Naive thymus-derived CD8-positive, alpha-beta T cell (primary cell): ENCODE measurements at regions of chr2 and their contacts with region 1.

Region 1: GRCh38 chr2:74178201-74179062 is at the start of gene MOB1A:
- DNase-seq: peak; percentile 94 to 98 (median 97)
- ATAC-seq: peak; percentile 90 to 91
- H3K4me3 Mint-ChIP-seq: peak within 1 kb of the TSS; percentile 82 to 95 (median 91)
- H3K27ac Mint-ChIP-seq: peak within 1 kb of the TSS; percentile 82 to 98 (median 96)
- H3K4me1 Mint-ChIP-seq: peaks cover 6 to 55% (median 34%) of the 10 kb centered on the region in 4 donors
- H3K27me3 Mint-ChIP-seq: no peaks in the 10 kb centered on the region
- polyA plus RNA-seq, gene MOB1A: 111 to 152 (median 145) TPM

Region 2: DNA sequence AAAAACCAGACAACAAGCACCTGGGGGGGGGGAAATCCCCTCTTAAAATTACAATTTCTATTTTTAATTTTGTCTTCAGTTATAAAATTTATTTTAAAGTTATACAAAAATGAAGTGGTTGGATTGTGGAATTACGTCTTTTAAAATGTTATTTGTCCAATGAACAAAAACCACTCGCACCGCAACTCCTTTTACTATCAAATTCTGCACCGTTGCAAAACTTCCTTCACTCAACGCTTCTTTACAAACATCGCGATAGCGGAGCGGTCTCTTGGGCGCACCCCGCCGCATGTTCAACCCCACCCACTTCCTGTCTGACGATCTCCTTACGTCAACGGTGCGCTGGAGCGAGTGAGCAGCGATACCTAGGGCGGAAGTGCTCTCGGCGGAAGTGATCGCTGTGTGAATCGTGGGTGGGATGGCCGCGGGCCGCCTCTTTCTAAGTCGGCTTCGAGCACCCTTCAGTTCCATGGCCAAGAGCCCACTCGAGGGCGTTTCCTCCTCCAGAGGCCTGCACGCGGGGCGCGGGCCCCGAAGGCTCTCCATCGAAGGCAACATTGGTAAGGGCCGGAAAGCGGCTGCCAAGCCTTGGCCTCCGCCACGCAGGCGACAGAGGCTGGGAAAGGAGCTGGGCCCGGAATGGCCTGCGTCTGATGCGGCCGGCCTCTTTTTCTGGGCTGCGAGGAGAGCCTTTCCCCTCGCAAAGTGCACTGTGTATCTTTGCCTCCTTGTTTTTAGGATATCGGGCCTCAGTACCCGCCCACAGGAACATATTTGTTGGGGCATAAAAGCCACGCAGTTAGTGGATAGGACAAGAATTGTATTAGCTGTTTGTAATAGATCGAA is 251.7 kb before region 1 on chr2 and contains the start of gene DGUOK:
- POLR2A ChIA-PET with region 1: interaction called, 12 read pairs
- DNase-seq: peak; percentile 86 to 99 (median 98)
- ATAC-seq: peak; percentile 95 to 98
- H3K4me3 Mint-ChIP-seq: peak within 1 kb of the TSS; percentile 79 to 95 (median 92)
- H3K27ac Mint-ChIP-seq: peak within 1 kb of the TSS; percentile 90 to 99 (median 98)
- H3K4me1 Mint-ChIP-seq: peaks cover 26 to 63% (median 55%) of the 10 kb centered on the region in 4 donors
- H3K27me3 Mint-ChIP-seq: no peaks in the 10 kb centered on the region
- polyA plus RNA-seq, gene DGUOK: 207 to 219 (median 215) TPM

Region 3: GRCh38 chr2:74147727-74148456 is 30.5 kb before region 1 on chr2 and contains the start of gene BOLA3:
- POLR2A ChIA-PET with region 1: interaction called, 43 read pairs
- DNase-seq: peak; percentile 59 to 86 (median 77)
- ATAC-seq: peak; percentile 88 to 92
- H3K4me3 Mint-ChIP-seq: no peak within 1 kb of the TSS
- H3K27ac Mint-ChIP-seq: no peak within 1 kb of the TSS
- H3K4me1 Mint-ChIP-seq: peaks cover 0 to 4% (median 0%) of the 10 kb centered on the region in 4 donors
- H3K27me3 Mint-ChIP-seq: no peaks in the 10 kb centered on the region
- polyA plus RNA-seq, gene BOLA3: 59.9 to 78.5 (median 68.3) TPM

Region 4: DNA sequence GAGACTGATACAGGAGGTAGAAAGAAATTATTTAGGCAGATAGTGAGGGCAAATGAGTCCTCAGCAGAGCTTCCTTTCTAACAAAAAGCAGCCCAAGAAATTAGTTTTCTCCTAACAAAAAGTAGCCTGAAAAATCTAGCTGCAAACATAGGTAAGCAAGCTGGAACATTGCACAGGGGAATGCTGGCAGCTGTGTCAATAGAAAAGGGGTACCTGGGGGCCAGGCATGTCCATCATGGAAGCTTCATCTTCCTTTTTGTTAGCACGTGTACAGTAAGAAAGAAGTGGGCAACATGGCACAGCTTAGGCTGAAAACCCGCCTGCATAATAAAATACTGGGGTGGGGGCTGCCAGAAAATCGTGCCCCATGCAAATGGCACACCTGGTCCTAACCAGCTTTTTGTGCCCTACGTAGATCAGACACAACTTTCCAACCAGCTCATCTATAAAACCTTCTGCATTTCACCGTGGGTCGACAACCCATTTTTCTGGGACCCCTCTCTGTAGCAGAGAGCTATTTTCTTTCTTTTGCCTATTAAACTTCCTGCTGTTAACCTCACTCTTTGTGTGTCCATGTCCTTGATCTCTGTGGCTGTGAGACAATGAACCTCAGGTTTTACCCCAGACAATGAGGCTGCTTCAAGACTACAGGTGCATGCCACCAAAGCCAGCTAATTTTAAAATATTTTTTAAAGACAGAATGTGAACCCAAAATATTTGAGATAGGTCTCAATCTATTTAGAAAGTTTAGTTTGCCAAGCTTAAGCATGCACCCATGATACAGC is 13.4 kb after region 1 on chr2:
- POLR2A ChIA-PET with region 1: interaction called, 80 read pairs
- DNase-seq: no peak
- ATAC-seq: no peak
- H3K4me3 Mint-ChIP-seq: no peak overlapping the region
- H3K27ac Mint-ChIP-seq: no peak overlapping the region
- H3K4me1 Mint-ChIP-seq: no peaks in the 10 kb centered on the region
- H3K27me3 Mint-ChIP-seq: peaks cover 0 to 10% (median 0%) of the 10 kb centered on the region in 5 donors

Region 5: GRCh38 chr2:74206180-74206688 is 27.8 kb after region 1 on chr2:
- POLR2A ChIA-PET with region 1: interaction called, 80 read pairs
- DNase-seq: peak in 5 of 10 donors; percentile 25 to 58 (median 35)
- ATAC-seq: peak; percentile 76 to 93
- H3K4me3 Mint-ChIP-seq: peak overlapping the region; percentile 56 to 83 (median 78)
- H3K27ac Mint-ChIP-seq: peak overlapping the region; percentile 89 to 96 (median 94)
- H3K4me1 Mint-ChIP-seq: peaks cover 8 to 44% (median 29%) of the 10 kb centered on the region in 4 donors
- H3K27me3 Mint-ChIP-seq: no peaks in the 10 kb centered on the region

Region 6: DNA sequence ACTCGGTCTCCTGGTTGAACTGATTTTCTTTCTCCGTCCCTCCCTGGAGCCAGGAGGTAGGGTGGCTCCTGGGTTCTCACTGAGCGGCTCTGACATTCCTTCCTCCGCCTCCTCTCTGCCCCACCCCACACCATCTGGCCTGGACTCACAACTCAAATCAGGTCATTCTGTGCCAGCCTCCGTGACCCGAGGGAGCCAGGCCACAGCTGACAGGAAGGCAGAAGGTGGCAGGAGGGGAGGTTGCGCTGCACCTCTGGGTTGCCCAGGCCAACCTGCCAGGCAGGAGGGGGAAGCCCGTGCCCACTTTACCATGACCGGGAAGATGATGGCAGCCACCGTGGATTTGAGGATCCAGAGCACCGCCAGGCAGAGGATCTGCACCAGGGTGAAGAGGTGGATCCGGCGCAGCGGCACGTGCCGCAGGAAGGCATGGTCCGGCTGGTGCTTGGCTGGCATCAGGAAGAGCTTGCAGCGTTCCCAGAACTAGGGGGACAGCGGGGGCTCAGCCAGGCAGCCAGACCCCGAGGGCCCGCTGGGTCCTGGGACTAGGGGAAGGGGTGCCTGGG is 48.3 kb after region 1 on chr2:
- POLR2A ChIA-PET with region 1: no interaction called
- DNase-seq: no peak
- ATAC-seq: no peak
- H3K4me3 Mint-ChIP-seq: no peak overlapping the region
- H3K27ac Mint-ChIP-seq: peak overlapping the region in 2 of 10 donors; percentile 15 to 37
- H3K4me1 Mint-ChIP-seq: no peaks in the 10 kb centered on the region
- H3K27me3 Mint-ChIP-seq: no peaks in the 10 kb centered on the region